ENCODE measurements at regions of chr4 and their contacts with region 1.

Region 1: GRCh38 chr4:48906206-48907173 is at the start of gene OCIAD2:
- DNase-seq: peak; percentile 90
- H3K4me3 Mint-ChIP-seq: peak within 1 kb of the TSS; percentile 89
- H3K27ac Mint-ChIP-seq: peak within 1 kb of the TSS; percentile 90
- H3K4me1 Mint-ChIP-seq: peaks cover 56% of the 10 kb centered on the region
- H3K27me3 Mint-ChIP-seq: no peaks in the 10 kb centered on the region
- total RNA-seq, gene OCIAD2: 59.7 to 76.9 TPM

Region 2: GRCh38 chr4:48269861-48270522 is 636.5 kb before region 1 on chr4:
- CTCF ChIA-PET with region 1: no interaction called
- intact Hi-C with region 1: loop called (anchors 2 kb)
- DNase-seq: peak; percentile 93
- H3K4me3 Mint-ChIP-seq: peak overlapping the region; percentile 93
- H3K27ac Mint-ChIP-seq: peak overlapping the region; percentile 83
- H3K4me1 Mint-ChIP-seq: peaks cover 9% of the 10 kb centered on the region
- H3K27me3 Mint-ChIP-seq: no peaks in the 10 kb centered on the region

Region 3: GRCh38 chr4:48499551-48500066 is 406.9 kb before region 1 on chr4:
- CTCF ChIA-PET with region 1: no interaction called
- intact Hi-C with region 1: loop called (anchors 2 kb)
- DNase-seq: no peak
- H3K4me3 Mint-ChIP-seq: no peak overlapping the region
- H3K27ac Mint-ChIP-seq: no peak overlapping the region
- H3K4me1 Mint-ChIP-seq: peaks cover 16% of the 10 kb centered on the region
- H3K27me3 Mint-ChIP-seq: no peaks in the 10 kb centered on the region

Region 4: DNA sequence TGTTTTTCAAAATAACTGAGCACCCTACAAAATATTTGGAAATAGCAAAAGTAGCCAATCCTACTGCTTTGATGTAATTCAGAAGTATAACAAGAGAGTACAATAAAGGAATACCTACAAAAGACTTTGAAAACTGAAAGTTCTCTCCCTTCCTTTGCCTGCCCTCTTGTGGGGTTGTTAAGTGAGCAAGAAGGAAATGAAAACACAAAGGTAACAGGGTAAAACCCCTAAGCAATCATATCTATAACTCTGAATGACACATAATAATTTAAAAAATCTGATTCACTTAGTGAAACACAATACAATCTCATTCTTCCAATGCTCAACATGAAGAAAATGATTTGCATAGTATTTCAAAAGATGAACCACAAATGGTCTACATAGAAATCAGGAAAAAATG is 224.6 kb before region 1 on chr4:
- CTCF ChIA-PET with region 1: no interaction called
- intact Hi-C with region 1: loop called (anchors 1 kb)
- DNase-seq: peak; percentile 51
- H3K4me3 Mint-ChIP-seq: no peak overlapping the region
- H3K27ac Mint-ChIP-seq: peak overlapping the region; percentile 63
- H3K4me1 Mint-ChIP-seq: peaks cover 38% of the 10 kb centered on the region
- H3K27me3 Mint-ChIP-seq: no peaks in the 10 kb centered on the region

Region 5: GRCh38 chr4:48766131-48766792 is 140.2 kb before region 1 on chr4:
- CTCF ChIA-PET with region 1: no interaction called
- intact Hi-C with region 1: no loop called
- DNase-seq: peak; percentile 38
- H3K4me3 Mint-ChIP-seq: no peak overlapping the region
- H3K27ac Mint-ChIP-seq: no peak overlapping the region
- H3K4me1 Mint-ChIP-seq: peaks cover 55% of the 10 kb centered on the region
- H3K27me3 Mint-ChIP-seq: no peaks in the 10 kb centered on the region

Region 6: DNA sequence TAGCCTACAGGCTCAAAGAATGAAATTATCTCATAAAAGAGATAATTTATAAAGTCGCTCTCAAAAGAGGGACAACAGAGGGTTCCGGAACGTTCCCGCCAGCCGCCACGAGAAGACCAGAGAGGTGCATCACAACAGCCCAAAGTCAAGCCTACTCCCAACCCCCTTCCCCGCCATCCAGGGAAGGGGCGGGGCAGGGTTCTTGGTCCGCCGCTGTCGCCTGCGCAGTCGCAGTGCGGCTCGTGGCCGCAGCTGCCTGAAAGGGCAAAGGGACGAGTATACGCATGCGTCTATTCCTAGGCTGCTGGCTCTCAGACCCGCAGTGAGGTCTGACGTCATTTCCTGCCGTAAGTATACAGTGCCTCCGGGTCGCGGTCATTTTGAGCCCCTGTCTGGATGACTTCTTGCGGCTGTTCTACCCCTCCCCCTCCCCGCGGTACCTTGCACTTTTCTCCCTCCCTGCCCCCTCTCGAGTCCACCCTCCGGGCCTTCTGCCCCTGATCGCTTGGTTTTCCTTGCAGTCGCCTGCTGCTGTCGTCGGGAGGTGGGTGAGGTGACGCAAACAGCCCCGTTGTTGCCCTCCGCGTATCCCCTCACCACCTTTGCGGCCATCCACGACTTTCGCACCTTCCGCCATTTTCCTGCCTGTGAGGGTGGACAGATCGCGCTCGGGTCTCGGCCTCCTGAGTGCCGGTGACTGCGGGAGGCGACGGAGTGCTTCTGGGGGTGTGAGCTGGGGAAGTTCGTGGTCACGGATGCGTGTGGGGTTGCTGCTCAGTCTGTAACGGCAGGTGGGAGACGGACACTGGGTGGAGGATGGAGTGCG is 75.6 kb before region 1 on chr4 and contains the start of gene OCIAD1:
- CTCF ChIA-PET with region 1: interaction called, 4 read pairs
- intact Hi-C with region 1: loop called (anchors 1 kb)
- DNase-seq: peak; percentile 96
- H3K4me3 Mint-ChIP-seq: peak within 1 kb of the TSS; percentile 100
- H3K27ac Mint-ChIP-seq: peak within 1 kb of the TSS; percentile 100
- H3K4me1 Mint-ChIP-seq: peaks cover 23% of the 10 kb centered on the region
- H3K27me3 Mint-ChIP-seq: peaks cover 6% of the 10 kb centered on the region
- total RNA-seq, gene OCIAD1: 91.9 to 99.0 TPM

Region 7: DNA sequence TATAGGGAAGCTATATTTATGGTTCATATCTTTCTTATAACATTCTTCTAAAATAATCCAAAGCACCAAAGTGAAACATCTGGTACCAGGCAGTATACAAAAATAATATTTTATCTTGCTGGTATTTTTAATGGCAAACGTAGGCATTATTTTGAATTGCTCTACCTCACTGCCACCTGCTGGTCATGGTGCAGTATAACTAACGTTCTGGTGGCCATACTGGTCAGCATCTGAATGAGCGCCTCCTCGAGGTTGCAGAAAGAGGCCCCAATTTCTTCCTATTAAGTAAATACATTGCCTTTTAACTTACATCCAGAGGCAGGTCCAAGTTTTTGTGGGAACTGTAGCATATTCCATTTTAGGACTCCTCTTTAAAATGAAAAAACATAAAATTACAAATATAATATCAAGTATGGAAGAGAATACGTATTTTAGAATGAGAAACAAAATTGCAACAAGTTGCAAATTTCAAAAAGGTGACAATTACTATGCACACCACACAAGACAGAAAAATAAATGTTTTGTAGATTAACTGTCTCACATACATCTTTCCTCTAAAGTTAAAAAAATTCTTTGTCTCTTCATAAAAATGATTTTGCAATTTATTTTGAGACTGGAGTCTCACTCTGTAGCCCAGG is 56.7 kb after region 1 on chr4:
- CTCF ChIA-PET with region 1: interaction called, 3 read pairs
- intact Hi-C with region 1: loop called (anchors 2 kb)
- DNase-seq: peak; percentile 89
- H3K4me3 Mint-ChIP-seq: no peak overlapping the region
- H3K27ac Mint-ChIP-seq: no peak overlapping the region
- H3K4me1 Mint-ChIP-seq: no peaks in the 10 kb centered on the region
- H3K27me3 Mint-ChIP-seq: no peaks in the 10 kb centered on the region